ENCODE measurements at regions of chr20 and their contacts with region 1.

Region 1: GRCh38 chr20:35619196-35620095 is 3.8 kb downstream of the SPAG4 start:
- DNase-seq: peak; percentile 96
- ATAC-seq: peak; percentile 61
- H3K4me3 ChIP-seq: peak overlapping the region; percentile 77
- H3K27ac ChIP-seq: no peak overlapping the region
- H3K4me1 ChIP-seq: peaks cover 32% of the 10 kb centered on the region; the same call in 1 of the 2 replicates
- H3K27me3 ChIP-seq: no peaks in the 10 kb centered on the region
- CTCF ChIP-seq: peak; percentile 82

Region 2: GRCh38 chr20:35463455-35464300 is 155.8 kb before region 1 on chr20:
- CTCF ChIA-PET with region 1: interaction called, 10 read pairs
- POLR2A ChIA-PET with region 1: no interaction called
- intact Hi-C with region 1: loop called (anchors 5 kb)
- DNase-seq: peak; percentile 85
- ATAC-seq: peak; percentile 76
- H3K4me3 ChIP-seq: no peak overlapping the region
- H3K27ac ChIP-seq: no peak overlapping the region
- H3K4me1 ChIP-seq: peaks cover 20% of the 10 kb centered on the region
- H3K27me3 ChIP-seq: no peaks in the 10 kb centered on the region
- CTCF ChIP-seq: peak; percentile 91

Region 3: GRCh38 chr20:35551503-35551902 is 67.9 kb before region 1 on chr20:
- CTCF ChIA-PET with region 1: no interaction called
- POLR2A ChIA-PET with region 1: interaction called, 16 read pairs
- intact Hi-C with region 1: no loop called
- DNase-seq: no peak
- ATAC-seq: no peak
- H3K4me3 ChIP-seq: no peak overlapping the region
- H3K27ac ChIP-seq: no peak overlapping the region
- H3K4me1 ChIP-seq: no peaks in the 10 kb centered on the region
- H3K27me3 ChIP-seq: no peaks in the 10 kb centered on the region
- CTCF ChIP-seq: no peak

Region 4: DNA sequence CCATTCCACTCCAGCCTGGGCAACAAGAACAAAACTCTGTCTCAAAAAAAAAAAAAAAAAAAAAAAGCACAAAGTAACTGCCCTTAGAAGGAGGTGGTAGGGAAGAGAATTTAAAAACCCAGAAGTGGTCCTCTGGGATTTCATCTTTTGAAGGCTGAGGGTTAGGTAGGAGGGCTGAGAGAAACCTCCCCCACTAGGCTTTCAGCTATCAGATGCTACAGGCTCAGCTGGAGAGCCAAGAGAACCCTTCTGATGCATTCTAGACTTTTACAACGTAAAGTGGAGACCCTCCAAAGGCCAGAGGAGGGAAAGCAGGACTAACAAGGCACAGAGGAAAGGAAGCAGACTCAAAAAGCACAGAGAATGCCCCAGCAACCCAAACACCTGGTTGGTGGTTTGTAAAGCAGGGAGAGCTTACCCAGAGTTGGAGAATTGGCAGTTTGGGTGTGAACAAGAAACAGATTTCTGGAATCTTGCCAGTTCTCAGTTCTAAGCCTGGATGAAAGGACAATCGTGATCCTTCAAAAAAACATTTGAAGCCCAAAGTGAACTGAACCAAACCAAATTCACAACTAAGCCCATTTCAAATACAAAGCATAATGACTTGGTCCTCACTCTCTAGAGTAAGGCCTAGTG is 27.0 kb before region 1 on chr20:
- CTCF ChIA-PET with region 1: interaction called, 11 read pairs
- POLR2A ChIA-PET with region 1: no interaction called
- intact Hi-C with region 1: no loop called
- DNase-seq: no peak
- ATAC-seq: no peak
- H3K4me3 ChIP-seq: no peak overlapping the region
- H3K27ac ChIP-seq: no peak overlapping the region
- H3K4me1 ChIP-seq: no peaks in the 10 kb centered on the region
- H3K27me3 ChIP-seq: no peaks in the 10 kb centered on the region
- CTCF ChIP-seq: no peak

Region 5: GRCh38 chr20:35699127-35699975 is 79.9 kb after region 1 on chr20 and contains the starts of genes NFS1 and ROMO1:
- CTCF ChIA-PET with region 1: no interaction called
- POLR2A ChIA-PET with region 1: interaction called, 4 read pairs
- intact Hi-C with region 1: loop called (anchors 1 kb)
- DNase-seq: peak; percentile 89
- ATAC-seq: peak; percentile 81
- H3K4me3 ChIP-seq: peak within 1 kb of the TSS; percentile 79
- H3K27ac ChIP-seq: peak within 1 kb of the TSS; percentile 72
- H3K4me1 ChIP-seq: peaks cover 20% of the 10 kb centered on the region
- H3K27me3 ChIP-seq: no peaks in the 10 kb centered on the region
- CTCF ChIP-seq: no peak; the same call in 1 of the 2 replicates
- total RNA-seq, gene NFS1: 71.8 and 75.8 TPM in 2 replicates
- total RNA-seq, gene ROMO1: 479 and 530 TPM in 2 replicates

Region 6: GRCh38 chr20:35883778-35884540 is 264.5 kb after region 1 on chr20:
- CTCF ChIA-PET with region 1: no interaction called
- POLR2A ChIA-PET with region 1: no interaction called
- intact Hi-C with region 1: no loop called
- DNase-seq: peak; percentile 99
- ATAC-seq: peak; percentile 86
- H3K4me3 ChIP-seq: peak overlapping the region; percentile 39; the same call in 1 of the 2 replicates
- H3K27ac ChIP-seq: peak overlapping the region; percentile 97
- H3K4me1 ChIP-seq: peaks cover 41% of the 10 kb centered on the region
- H3K27me3 ChIP-seq: no peaks in the 10 kb centered on the region
- CTCF ChIP-seq: peak; percentile 92